ENCODE measurements at regions of chr10 and their contacts with region 1.

Region 1: DNA sequence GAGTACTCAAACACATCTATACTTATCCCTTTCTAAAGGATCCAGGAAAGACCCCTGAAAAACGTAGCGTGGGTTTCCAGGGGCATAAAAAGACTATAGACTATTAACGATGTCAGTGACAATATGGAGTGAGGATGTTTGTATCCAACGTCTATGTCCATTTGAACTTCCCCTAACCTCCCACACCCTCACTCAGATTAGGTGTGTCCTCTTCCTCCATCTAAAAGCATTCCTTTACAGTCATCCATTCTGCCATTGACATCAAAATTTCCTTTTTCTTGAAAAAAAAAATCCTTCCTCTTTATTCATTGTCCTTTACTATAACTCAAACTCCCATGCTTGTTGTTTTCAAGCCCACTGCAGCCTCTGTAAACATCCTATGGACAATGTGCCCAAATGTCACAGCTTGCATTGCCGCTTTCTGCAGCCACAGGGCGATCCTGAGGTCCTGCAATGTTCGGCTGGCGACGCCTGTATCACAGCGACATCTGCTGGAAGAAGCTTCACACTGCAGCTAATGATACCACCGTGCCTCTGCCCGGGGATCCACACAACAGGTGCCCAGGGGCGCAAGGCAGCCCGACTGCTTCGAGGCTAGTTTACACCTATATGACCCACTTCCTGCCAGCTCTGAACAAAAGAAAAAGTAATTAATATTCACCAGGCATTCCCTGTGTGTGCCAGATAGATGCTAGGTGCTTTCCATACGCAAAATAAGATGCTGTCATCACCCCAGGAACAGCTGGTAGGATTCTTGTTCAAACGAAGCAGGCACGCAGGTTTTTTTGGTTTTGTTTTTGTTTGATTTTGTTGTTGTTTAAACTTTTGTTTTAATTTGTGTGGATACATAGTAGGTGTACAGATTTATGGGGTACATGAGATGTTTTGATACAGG is 267.9 kb upstream of the GHITM start:
- DNase-seq: peak; percentile 69
- H3K4me3 ChIP-seq: no peak overlapping the region; a peak in 1 of 4 replicates
- H3K27ac ChIP-seq: no peak overlapping the region
- H3K4me1 ChIP-seq: no peaks in the 10 kb centered on the region; a peak in 1 of 4 replicates
- H3K27me3 ChIP-seq: no peaks in the 10 kb centered on the region
- CTCF ChIP-seq: peak; percentile 92
- EP300 ChIP-seq: no peak
- RAD21 ChIP-seq: peak; percentile 99

Region 2: DNA sequence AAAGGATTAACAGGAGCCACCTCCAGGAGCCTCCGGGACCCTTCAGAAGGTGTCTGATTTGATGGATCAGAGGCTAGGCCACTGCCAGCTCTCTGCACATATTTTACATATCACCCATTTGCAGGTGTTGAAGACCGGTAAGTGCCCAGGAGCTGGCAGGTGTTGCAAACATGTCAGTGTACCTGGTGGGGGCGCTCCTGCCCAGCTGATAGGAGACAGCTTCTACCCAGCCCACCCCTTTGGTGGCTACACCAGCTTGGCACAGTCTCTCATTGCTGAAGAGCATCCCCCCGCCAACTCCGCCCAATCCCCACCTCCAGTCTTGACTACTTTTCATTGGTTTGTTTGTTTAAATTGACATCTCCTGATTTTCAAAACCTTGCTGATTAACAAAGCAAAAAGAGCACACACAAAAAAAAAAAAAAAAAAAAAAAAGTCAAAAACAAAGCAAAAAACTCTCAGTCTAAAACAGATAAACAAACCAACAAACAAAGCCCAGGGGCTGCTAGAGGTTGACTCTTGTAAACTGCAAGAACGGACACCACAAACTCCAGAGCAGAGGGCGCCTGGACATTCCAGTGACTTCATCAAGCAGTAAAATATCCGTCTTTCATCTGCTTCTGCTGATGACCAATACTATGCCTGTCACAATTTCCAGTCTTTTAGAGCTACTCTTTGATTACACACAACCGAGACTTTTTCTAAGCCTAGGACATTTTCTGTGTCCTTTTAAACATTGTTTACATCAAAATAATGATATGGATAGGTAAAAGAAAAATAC is 1721.1 kb before region 1 on chr10:
- CTCF ChIA-PET with region 1: interaction called, 10 read pairs
- POLR2A ChIA-PET with region 1: no interaction called
- DNase-seq: peak; percentile 32
- H3K4me3 ChIP-seq: peak overlapping the region in 1 of 2 experiments; percentile 12; a peak in 1 of 4 replicates
- H3K27ac ChIP-seq: no peak overlapping the region
- H3K4me1 ChIP-seq: no peaks in the 10 kb centered on the region; a peak in 1 of 4 replicates
- H3K27me3 ChIP-seq: no peaks in the 10 kb centered on the region
- CTCF ChIP-seq: peak; percentile 57
- EP300 ChIP-seq: no peak
- RAD21 ChIP-seq: peak; percentile 78

Region 3: GRCh38 chr10:82796510-82796909 is 1074.9 kb before region 1 on chr10:
- CTCF ChIA-PET with region 1: interaction called, 59 read pairs
- POLR2A ChIA-PET with region 1: no interaction called
- DNase-seq: peak; percentile 9
- H3K4me3 ChIP-seq: no peak overlapping the region; a peak in 1 of 4 replicates
- H3K27ac ChIP-seq: no peak overlapping the region
- H3K4me1 ChIP-seq: peaks cover 3 to 4% of the 10 kb centered on the region in 2 experiments; a peak in 2 of 4 replicates
- H3K27me3 ChIP-seq: no peaks in the 10 kb centered on the region
- CTCF ChIP-seq: peak; percentile 76
- EP300 ChIP-seq: no peak
- RAD21 ChIP-seq: peak; percentile 88

Region 4: DNA sequence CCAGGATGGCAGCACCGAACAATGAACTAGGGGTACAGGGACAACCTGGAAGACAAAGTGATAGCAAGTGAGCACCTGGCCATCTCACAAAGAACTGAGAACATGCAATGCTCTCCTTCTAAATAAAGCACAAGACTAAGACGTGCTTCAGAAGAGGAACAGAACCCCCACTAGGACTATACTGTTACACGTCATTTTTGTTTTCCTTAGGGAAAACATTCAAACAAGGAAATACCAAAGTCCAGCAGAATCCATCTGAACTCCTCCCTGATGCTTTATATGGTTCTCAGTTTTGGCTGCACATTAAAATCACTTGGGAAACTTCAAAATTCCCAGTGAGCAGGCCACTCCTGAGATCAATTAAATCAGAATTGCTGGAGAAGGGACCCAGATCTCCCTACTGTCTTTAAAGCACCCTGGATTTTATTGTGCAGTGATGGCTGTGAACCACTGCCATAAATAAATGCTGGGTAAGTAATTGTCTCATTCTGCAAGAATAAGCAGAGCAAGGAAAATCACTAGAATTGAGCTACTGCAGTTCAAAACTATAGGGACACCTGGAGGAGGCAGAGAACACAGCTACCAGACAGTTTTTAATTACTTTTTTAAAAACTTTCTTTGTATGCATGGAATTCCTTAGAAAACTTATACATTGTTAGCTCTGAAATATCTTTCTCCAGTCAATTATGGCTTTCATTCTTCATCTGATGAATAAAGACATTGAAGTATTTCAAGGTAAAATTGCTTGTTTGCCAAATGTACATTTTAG is 598.6 kb before region 1 on chr10:
- CTCF ChIA-PET with region 1: interaction called, 13 read pairs
- POLR2A ChIA-PET with region 1: no interaction called
- DNase-seq: no peak
- H3K4me3 ChIP-seq: no peak overlapping the region
- H3K27ac ChIP-seq: peak overlapping the region in 1 of 2 experiments; percentile 86; a peak in 1 of 4 replicates
- H3K4me1 ChIP-seq: peaks cover 0 to 10% of the 10 kb centered on the region in 2 experiments; a peak in 2 of 4 replicates
- H3K27me3 ChIP-seq: no peaks in the 10 kb centered on the region
- CTCF ChIP-seq: no peak
- EP300 ChIP-seq: no peak
- RAD21 ChIP-seq: peak; percentile 43

Region 5: GRCh38 chr10:83542774-83543411 is 328.5 kb before region 1 on chr10:
- CTCF ChIA-PET with region 1: interaction called, 12 read pairs
- POLR2A ChIA-PET with region 1: no interaction called
- DNase-seq: no peak
- H3K4me3 ChIP-seq: no peak overlapping the region
- H3K27ac ChIP-seq: no peak overlapping the region
- H3K4me1 ChIP-seq: peaks cover 0 to 14% of the 10 kb centered on the region in 2 experiments; a peak in 2 of 4 replicates
- H3K27me3 ChIP-seq: no peaks in the 10 kb centered on the region
- CTCF ChIP-seq: no peak
- EP300 ChIP-seq: no peak
- RAD21 ChIP-seq: no peak

Region 6: DNA sequence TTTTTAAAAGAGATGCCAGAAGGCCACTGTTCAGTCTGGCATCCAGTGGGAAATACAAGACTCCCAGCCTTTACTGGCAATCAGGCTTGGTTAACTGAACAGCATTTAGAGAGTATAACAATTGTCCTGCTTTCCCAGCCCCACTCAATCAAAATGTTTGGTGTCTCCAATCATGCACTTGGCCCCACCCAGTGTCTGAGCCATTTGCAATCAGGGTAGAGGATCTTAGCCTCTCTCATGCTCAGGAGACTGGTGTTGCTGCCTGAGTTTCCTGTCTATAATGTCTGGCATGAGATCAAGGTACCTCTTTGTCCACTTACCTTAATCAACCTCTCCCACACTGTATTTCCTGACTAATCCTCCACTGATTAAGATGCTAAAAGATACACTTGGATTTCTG is 22.3 kb before region 1 on chr10:
- CTCF ChIA-PET with region 1: interaction called, 16 read pairs
- POLR2A ChIA-PET with region 1: no interaction called
- DNase-seq: no peak
- H3K4me3 ChIP-seq: no peak overlapping the region
- H3K27ac ChIP-seq: no peak overlapping the region
- H3K4me1 ChIP-seq: no peaks in the 10 kb centered on the region; a peak in 1 of 4 replicates
- H3K27me3 ChIP-seq: no peaks in the 10 kb centered on the region
- CTCF ChIP-seq: no peak
- EP300 ChIP-seq: no peak
- RAD21 ChIP-seq: no peak